ENCODE measurements at regions of chr17 and their contacts with region 1.

Region 1: GRCh38 chr17:82698065-82698973 is at the start of gene RAB40B:
- DNase-seq: peak; percentile 94
- ATAC-seq: peak; percentile 98
- H3K4me3 Mint-ChIP-seq: peak within 1 kb of the TSS; percentile 82
- H3K27ac Mint-ChIP-seq: no peak within 1 kb of the TSS
- H3K4me1 Mint-ChIP-seq: peaks cover 16% of the 10 kb centered on the region
- H3K27me3 Mint-ChIP-seq: peaks cover 4% of the 10 kb centered on the region
- CTCF ChIP-seq: no peak
- total RNA-seq, gene RAB40B: 2.0 and 2.6 TPM in 2 replicates

Region 2: DNA sequence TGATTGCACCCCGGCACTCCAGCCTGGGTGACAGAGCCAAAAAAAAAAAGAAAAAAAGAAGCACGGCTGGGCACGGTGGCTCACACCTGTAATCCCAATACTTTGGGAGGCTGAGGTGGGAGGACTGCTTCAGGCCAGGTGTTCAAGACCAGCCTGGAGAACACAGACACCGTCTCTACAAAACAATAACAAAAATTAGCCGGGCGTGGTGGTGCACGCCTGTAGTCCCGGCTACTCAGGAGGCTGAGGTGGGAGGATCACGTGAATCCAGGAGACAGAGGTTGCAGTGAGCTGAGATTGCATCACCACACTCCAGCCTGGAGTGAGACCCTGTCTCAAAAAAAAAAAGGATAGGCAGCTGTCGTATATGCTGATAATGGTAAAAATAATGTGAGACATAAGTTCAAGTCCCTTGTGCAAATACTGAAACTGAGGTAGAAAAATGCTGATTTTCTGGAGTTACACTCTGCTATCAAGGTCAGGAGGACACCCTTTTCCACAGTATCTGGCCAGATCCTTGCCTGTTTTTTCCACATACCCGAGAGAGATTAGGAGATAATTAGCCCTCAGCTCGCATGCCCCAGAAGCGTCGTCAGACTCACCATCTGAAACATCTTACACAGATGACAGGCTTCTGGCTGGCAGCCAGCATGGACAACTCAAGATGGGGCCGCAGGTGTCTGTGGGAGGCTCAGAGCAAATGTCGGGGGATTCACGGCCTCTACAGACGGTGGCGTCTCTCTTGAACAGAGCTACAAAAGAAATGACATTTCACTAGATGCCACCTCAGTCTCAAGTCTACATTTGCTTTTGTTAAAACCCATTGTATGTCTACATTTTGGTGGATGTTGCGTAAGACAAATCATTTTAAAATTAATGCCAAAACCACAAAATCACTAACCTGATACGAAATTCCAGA is 86.9 kb before region 1 on chr17:
- CTCF ChIA-PET with region 1: no interaction called
- POLR2A ChIA-PET with region 1: no interaction called
- intact Hi-C with region 1: no loop called
- DNase-seq: no peak
- ATAC-seq: no peak
- H3K4me3 Mint-ChIP-seq: no peak overlapping the region
- H3K27ac Mint-ChIP-seq: no peak overlapping the region
- H3K4me1 Mint-ChIP-seq: no peaks in the 10 kb centered on the region
- H3K27me3 Mint-ChIP-seq: no peaks in the 10 kb centered on the region
- CTCF ChIP-seq: no peak

Region 3: GRCh38 chr17:82751571-82752370 is 53.5 kb after region 1 on chr17 and contains the start of gene TBCD:
- CTCF ChIA-PET with region 1: no interaction called
- POLR2A ChIA-PET with region 1: no interaction called
- intact Hi-C with region 1: loop called (anchors 1 kb)
- DNase-seq: peak; percentile 86
- ATAC-seq: peak; percentile 88
- H3K4me3 Mint-ChIP-seq: peak within 1 kb of the TSS; percentile 84
- H3K27ac Mint-ChIP-seq: no peak within 1 kb of the TSS
- H3K4me1 Mint-ChIP-seq: peaks cover 22% of the 10 kb centered on the region
- H3K27me3 Mint-ChIP-seq: no peaks in the 10 kb centered on the region
- CTCF ChIP-seq: no peak
- total RNA-seq, gene TBCD: 49.9 and 50.9 TPM in 2 replicates